Naive thymus-derived CD4-positive, alpha-beta T cell (primary cell): ENCODE measurements at regions of chr13 and their contacts with region 1.

Region 1: DNA sequence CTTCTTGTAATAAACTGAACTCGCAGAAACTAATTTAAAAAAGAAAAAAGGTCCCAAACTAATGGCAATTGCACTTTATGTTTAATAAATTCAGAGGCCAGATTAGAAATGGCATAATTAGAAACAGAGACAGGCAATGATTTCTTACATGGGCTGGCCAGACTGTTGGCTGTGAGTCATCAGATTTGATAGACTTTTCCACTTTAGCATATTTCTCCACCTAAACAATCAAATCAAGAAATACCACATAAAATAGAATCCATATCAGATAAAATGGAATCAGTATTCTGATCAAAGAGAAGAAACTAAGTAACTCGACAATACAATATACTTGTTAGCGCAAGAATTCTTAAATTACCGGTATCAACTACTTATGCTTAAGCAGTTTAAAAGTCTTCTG is 29.0 kb downstream of the EXOSC8 start:
- DNase-seq: no peak
- ATAC-seq: no peak
- H3K4me3 ChIP-seq: no peak overlapping the region
- H3K4me3 Mint-ChIP-seq: no peak overlapping the region
- H3K27ac ChIP-seq: no peak overlapping the region
- H3K27ac Mint-ChIP-seq: peak overlapping the region in 1 of 9 donors; percentile 17
- H3K4me1 ChIP-seq: no peaks in the 10 kb centered on the region
- H3K4me1 Mint-ChIP-seq: peaks cover 0 to 7% (median 0%) of the 10 kb centered on the region in 7 donors
- H3K27me3 ChIP-seq: no peaks in the 10 kb centered on the region
- H3K27me3 Mint-ChIP-seq: no peaks in the 10 kb centered on the region

Region 2: DNA sequence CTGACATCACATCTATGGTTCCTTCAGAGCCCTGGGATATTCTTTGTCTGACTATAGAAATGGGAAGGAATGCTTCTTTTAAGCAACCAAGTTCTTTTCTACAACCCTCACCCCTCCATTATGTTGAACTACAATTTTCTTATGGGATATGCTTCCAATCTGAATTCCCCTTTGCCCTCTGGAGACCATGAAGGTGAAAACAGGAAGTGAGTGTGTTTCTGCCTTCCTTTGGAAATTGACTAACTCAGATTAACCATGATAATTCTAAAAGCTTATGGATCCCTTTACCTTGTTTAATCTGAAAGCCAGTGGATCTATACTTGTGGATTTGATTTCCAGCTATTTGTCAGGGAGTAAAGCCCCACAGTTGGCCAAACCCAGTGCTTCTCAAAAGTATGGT is 446.6 kb before region 1 on chr13:
- CTCF ChIA-PET with region 1: no interaction called
- POLR2A ChIA-PET with region 1: no interaction called
- intact Hi-C with region 1: no loop called
- DNase-seq: no peak
- ATAC-seq: no peak
- H3K4me3 ChIP-seq: no peak overlapping the region
- H3K4me3 Mint-ChIP-seq: no peak overlapping the region
- H3K27ac ChIP-seq: no peak overlapping the region
- H3K27ac Mint-ChIP-seq: no peak overlapping the region
- H3K4me1 ChIP-seq: no peaks in the 10 kb centered on the region
- H3K4me1 Mint-ChIP-seq: no peaks in the 10 kb centered on the region
- H3K27me3 ChIP-seq: peaks cover 0 to 4% of the 10 kb centered on the region in 2 donors
- H3K27me3 Mint-ChIP-seq: peaks cover 6 to 21% (median 15%) of the 10 kb centered on the region in 5 donors

Region 3: DNA sequence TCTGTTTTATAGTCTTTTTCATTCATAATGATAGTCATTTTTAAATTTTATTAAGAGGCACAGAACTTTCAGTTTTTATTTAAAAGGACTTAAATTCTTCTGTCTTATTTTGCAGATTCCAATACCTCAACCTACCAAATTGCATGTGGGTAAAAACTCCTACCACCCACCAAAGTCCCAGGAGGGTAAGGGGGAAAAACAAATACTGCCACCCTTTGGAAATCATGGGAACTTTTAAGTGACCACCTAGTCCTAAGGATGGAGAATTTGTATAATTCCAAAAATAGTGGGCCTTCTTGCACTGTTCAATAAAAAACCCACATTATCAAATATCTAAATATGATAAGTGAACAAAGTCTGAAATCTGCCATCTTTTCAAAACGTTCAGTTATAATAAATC is 20.2 kb after region 1 on chr13:
- CTCF ChIA-PET with region 1: no interaction called
- POLR2A ChIA-PET with region 1: no interaction called
- intact Hi-C with region 1: loop called in 1 of 2 experiments (anchors 2 kb)
- DNase-seq: no peak
- ATAC-seq: no peak
- H3K4me3 ChIP-seq: no peak overlapping the region
- H3K4me3 Mint-ChIP-seq: no peak overlapping the region
- H3K27ac ChIP-seq: no peak overlapping the region
- H3K27ac Mint-ChIP-seq: no peak overlapping the region
- H3K4me1 ChIP-seq: peaks cover 0 to 4% of the 10 kb centered on the region in 2 donors
- H3K4me1 Mint-ChIP-seq: peaks cover 19 to 55% (median 45%) of the 10 kb centered on the region in 7 donors
- H3K27me3 ChIP-seq: no peaks in the 10 kb centered on the region
- H3K27me3 Mint-ChIP-seq: no peaks in the 10 kb centered on the region